CD8-positive, alpha-beta T cell (primary cell): ENCODE measurements at regions of chr6 and their contacts with region 1.

Region 1: GRCh38 chr6:24581084-24581669 is 64.8 kb downstream of the KIAA0319 start:
- DNase-seq: peak; percentile 57 to 86 (median 80)
- ATAC-seq: peak; percentile 92
- H3K4me3 ChIP-seq: no peak overlapping the region
- H3K4me3 Mint-ChIP-seq: no peak overlapping the region
- H3K27ac ChIP-seq: no peak overlapping the region
- H3K27ac Mint-ChIP-seq: no peak overlapping the region
- H3K4me1 ChIP-seq: no peaks in the 10 kb centered on the region
- H3K4me1 Mint-ChIP-seq: peaks cover 4% of the 10 kb centered on the region
- H3K27me3 ChIP-seq: no peaks in the 10 kb centered on the region
- H3K27me3 Mint-ChIP-seq: no peaks in the 10 kb centered on the region
- CTCF ChIP-seq: peak; percentile 71

Region 2: GRCh38 chr6:24431045-24431451 is 150.1 kb before region 1 on chr6:
- CTCF ChIA-PET with region 1: no interaction called
- POLR2A ChIA-PET with region 1: no interaction called
- intact Hi-C with region 1: loop called in 1 of 2 experiments (anchors 2 kb)
- DNase-seq: peak in 3 of 9 experiments; percentile 17 to 62 (median 52)
- ATAC-seq: no peak
- H3K4me3 ChIP-seq: no peak overlapping the region
- H3K4me3 Mint-ChIP-seq: no peak overlapping the region
- H3K27ac ChIP-seq: no peak overlapping the region
- H3K27ac Mint-ChIP-seq: no peak overlapping the region
- H3K4me1 ChIP-seq: no peaks in the 10 kb centered on the region
- H3K4me1 Mint-ChIP-seq: no peaks in the 10 kb centered on the region
- H3K27me3 ChIP-seq: no peaks in the 10 kb centered on the region
- H3K27me3 Mint-ChIP-seq: no peaks in the 10 kb centered on the region
- CTCF ChIP-seq: peak; percentile 64

Region 3: GRCh38 chr6:24566020-24566767 is 15.0 kb before region 1 on chr6:
- CTCF ChIA-PET with region 1: interaction called, 27 read pairs
- POLR2A ChIA-PET with region 1: no interaction called
- intact Hi-C with region 1: no loop called
- DNase-seq: no peak
- ATAC-seq: no peak
- H3K4me3 ChIP-seq: no peak overlapping the region
- H3K4me3 Mint-ChIP-seq: no peak overlapping the region
- H3K27ac ChIP-seq: no peak overlapping the region
- H3K27ac Mint-ChIP-seq: no peak overlapping the region
- H3K4me1 ChIP-seq: no peaks in the 10 kb centered on the region
- H3K4me1 Mint-ChIP-seq: no peaks in the 10 kb centered on the region
- H3K27me3 ChIP-seq: no peaks in the 10 kb centered on the region
- H3K27me3 Mint-ChIP-seq: peaks cover 3% of the 10 kb centered on the region
- CTCF ChIP-seq: no peak

Region 4: GRCh38 chr6:24666641-24667377 is 85.6 kb after region 1 on chr6 and contains the starts of genes ACOT13 and TDP2:
- CTCF ChIA-PET with region 1: interaction called, 12 read pairs
- POLR2A ChIA-PET with region 1: no interaction called
- intact Hi-C with region 1: loop called (anchors 1 kb)
- DNase-seq: peak; percentile 92 to 99 (median 96)
- ATAC-seq: peak; percentile 93
- H3K4me3 ChIP-seq: peak within 1 kb of the TSS; percentile 89 to 94
- H3K4me3 Mint-ChIP-seq: peak within 1 kb of the TSS; percentile 100
- H3K27ac ChIP-seq: peak within 1 kb of the TSS; percentile 80 to 89
- H3K27ac Mint-ChIP-seq: peak within 1 kb of the TSS; percentile 98
- H3K4me1 ChIP-seq: peaks cover 45% of the 10 kb centered on the region
- H3K4me1 Mint-ChIP-seq: peaks cover 63% of the 10 kb centered on the region
- H3K27me3 ChIP-seq: no peaks in the 10 kb centered on the region
- H3K27me3 Mint-ChIP-seq: no peaks in the 10 kb centered on the region
- CTCF ChIP-seq: peak; percentile 54
- total RNA-seq, gene ACOT13: 1.2 to 2.3 TPM
- total RNA-seq, gene TDP2: 60.7 to 63.4 TPM

Region 5: GRCh38 chr6:24699521-24700359 is 118.6 kb after region 1 on chr6:
- CTCF ChIA-PET with region 1: interaction called, 122 read pairs
- POLR2A ChIA-PET with region 1: no interaction called
- intact Hi-C with region 1: loop called (anchors 1 kb)
- DNase-seq: no peak
- ATAC-seq: no peak
- H3K4me3 ChIP-seq: no peak overlapping the region
- H3K4me3 Mint-ChIP-seq: no peak overlapping the region
- H3K27ac ChIP-seq: peak overlapping the region in 1 of 2 experiments; percentile 0
- H3K27ac Mint-ChIP-seq: peak overlapping the region; percentile 71
- H3K4me1 ChIP-seq: no peaks in the 10 kb centered on the region
- H3K4me1 Mint-ChIP-seq: peaks cover 24% of the 10 kb centered on the region
- H3K27me3 ChIP-seq: no peaks in the 10 kb centered on the region
- H3K27me3 Mint-ChIP-seq: no peaks in the 10 kb centered on the region
- CTCF ChIP-seq: no peak

Region 6: GRCh38 chr6:24766680-24767462 is 185.7 kb after region 1 on chr6:
- CTCF ChIA-PET with region 1: interaction called, 42 read pairs
- POLR2A ChIA-PET with region 1: no interaction called
- intact Hi-C with region 1: loop called (anchors 1 kb)
- DNase-seq: peak in 2 of 9 experiments; percentile 43 to 58
- ATAC-seq: peak; percentile 73
- H3K4me3 ChIP-seq: no peak overlapping the region
- H3K4me3 Mint-ChIP-seq: no peak overlapping the region
- H3K27ac ChIP-seq: no peak overlapping the region
- H3K27ac Mint-ChIP-seq: no peak overlapping the region
- H3K4me1 ChIP-seq: no peaks in the 10 kb centered on the region
- H3K4me1 Mint-ChIP-seq: peaks cover 4% of the 10 kb centered on the region
- H3K27me3 ChIP-seq: no peaks in the 10 kb centered on the region
- H3K27me3 Mint-ChIP-seq: no peaks in the 10 kb centered on the region
- CTCF ChIP-seq: peak; percentile 65

Region 7: DNA sequence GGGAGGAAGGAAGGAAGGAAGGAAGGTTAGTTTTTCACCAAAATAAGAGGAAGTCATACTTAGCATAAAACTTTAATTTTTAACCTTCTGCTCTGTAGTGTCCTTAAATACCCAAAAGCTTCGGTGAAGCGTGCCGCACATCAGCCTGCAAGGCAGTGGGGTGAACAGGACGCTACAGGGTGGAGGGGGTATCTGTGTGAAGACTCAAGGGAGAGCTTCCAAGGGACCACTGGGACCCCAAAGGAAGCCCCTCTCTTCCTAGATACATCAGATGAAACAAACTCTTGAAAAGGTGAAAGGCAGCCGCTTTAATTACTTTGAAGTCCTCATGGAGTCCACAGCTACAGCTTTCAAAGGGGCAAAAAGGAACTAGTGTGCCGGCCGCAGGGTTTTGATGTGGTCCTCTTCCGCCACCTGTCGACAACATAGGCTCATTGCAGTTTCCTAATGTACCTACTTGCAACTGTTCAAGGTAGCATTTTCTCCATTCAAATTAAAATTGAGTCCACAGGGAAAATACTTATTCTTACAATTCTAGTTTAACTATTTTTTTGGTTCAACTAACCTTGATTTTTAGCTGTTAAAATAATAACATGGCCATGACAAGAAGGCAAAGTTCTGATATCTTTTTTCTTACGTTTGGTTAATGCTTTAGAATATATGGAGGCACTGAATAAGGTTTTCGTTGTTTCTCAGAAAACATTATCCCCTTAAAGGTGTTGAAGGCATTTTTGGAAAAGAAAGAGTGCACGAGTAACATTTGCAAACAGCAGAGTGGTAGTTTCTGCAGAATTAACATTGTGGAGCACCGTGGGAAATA is 489.6 kb after region 1 on chr6:
- CTCF ChIA-PET with region 1: interaction called, 9 read pairs
- POLR2A ChIA-PET with region 1: no interaction called
- intact Hi-C with region 1: loop called (anchors 1 to 2 kb)
- DNase-seq: peak; percentile 62 to 92 (median 81)
- ATAC-seq: peak; percentile 98
- H3K4me3 ChIP-seq: peak overlapping the region in 1 of 2 experiments; percentile 12
- H3K4me3 Mint-ChIP-seq: peak overlapping the region; percentile 73
- H3K27ac ChIP-seq: peak overlapping the region in 1 of 2 experiments; percentile 31
- H3K27ac Mint-ChIP-seq: peak overlapping the region; percentile 87
- H3K4me1 ChIP-seq: no peaks in the 10 kb centered on the region
- H3K4me1 Mint-ChIP-seq: peaks cover 9% of the 10 kb centered on the region
- H3K27me3 ChIP-seq: no peaks in the 10 kb centered on the region
- H3K27me3 Mint-ChIP-seq: no peaks in the 10 kb centered on the region
- CTCF ChIP-seq: peak; percentile 92